Left colon (tissue), 2 donors: ENCODE measurements at regions of chr15 and their contacts with region 1.

Region 1: DNA sequence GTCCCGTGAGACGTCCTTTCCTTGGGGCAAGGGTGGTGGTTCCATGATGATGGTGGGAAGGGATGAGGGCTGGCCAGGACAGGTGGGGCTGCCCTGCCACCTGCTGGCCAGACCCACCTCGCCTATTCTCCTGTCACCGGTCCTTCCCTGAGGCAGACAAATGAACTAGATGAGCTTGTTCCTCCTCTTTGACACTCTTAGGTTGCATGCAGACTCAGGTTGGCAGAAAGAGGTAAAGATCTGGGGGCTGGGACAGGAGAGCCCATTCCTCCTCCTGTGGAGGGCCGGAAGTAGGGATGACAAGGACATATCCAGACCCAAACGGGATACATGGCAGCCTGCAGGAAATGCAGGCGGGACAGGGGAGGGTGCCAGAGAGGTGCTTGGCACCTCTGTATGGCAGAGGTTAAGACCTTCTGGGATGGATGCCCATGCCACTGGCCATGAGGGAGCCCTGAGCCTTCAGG is 38.6 kb downstream of the ACSBG1 start:
- DNase-seq: peak; percentile 25 to 52
- ATAC-seq: peak; percentile 96

Region 2: GRCh38 chr15:78129077-78129750 is 66.6 kb before region 1 on chr15:
- intact Hi-C with region 1: loop called in 1 of 2 experiments (anchors 10 kb)
- DNase-seq: no peak
- ATAC-seq: peak; percentile 36